ENCODE measurements at regions of chr13 and their contacts with region 1.

Region 1: GRCh38 chr13:74226791-74227475 is 92.7 kb upstream of the KLF12 start:
- DNase-seq: no peak
- H3K4me3 ChIP-seq: no peak overlapping the region
- H3K4me3 Mint-ChIP-seq: no peak overlapping the region
- H3K27ac ChIP-seq: no peak overlapping the region
- H3K27ac Mint-ChIP-seq: no peak overlapping the region
- H3K4me1 ChIP-seq: peaks cover 24% of the 10 kb centered on the region
- H3K4me1 Mint-ChIP-seq: peaks cover 14 to 31% (median 20%) of the 10 kb centered on the region in 4 donors
- H3K27me3 ChIP-seq: no peaks in the 10 kb centered on the region
- H3K27me3 Mint-ChIP-seq: no peaks in the 10 kb centered on the region

Region 2: GRCh38 chr13:74070065-74070464 is 156.9 kb before region 1 on chr13:
- CTCF ChIA-PET with region 1: no interaction called
- POLR2A ChIA-PET with region 1: no interaction called
- intact Hi-C with region 1: loop called (anchors 5 kb)
- DNase-seq: peak; percentile 73 to 81 (median 75)
- H3K4me3 ChIP-seq: peak overlapping the region in 1 of 2 donors; percentile 43
- H3K4me3 Mint-ChIP-seq: peak overlapping the region; percentile 68 to 89 (median 79)
- H3K27ac ChIP-seq: peak overlapping the region; percentile 15
- H3K27ac Mint-ChIP-seq: peak overlapping the region; percentile 73 to 94 (median 89)
- H3K4me1 ChIP-seq: peaks cover 92% of the 10 kb centered on the region
- H3K4me1 Mint-ChIP-seq: peaks cover 64 to 85% (median 77%) of the 10 kb centered on the region in 4 donors
- H3K27me3 ChIP-seq: no peaks in the 10 kb centered on the region
- H3K27me3 Mint-ChIP-seq: no peaks in the 10 kb centered on the region

Region 3: DNA sequence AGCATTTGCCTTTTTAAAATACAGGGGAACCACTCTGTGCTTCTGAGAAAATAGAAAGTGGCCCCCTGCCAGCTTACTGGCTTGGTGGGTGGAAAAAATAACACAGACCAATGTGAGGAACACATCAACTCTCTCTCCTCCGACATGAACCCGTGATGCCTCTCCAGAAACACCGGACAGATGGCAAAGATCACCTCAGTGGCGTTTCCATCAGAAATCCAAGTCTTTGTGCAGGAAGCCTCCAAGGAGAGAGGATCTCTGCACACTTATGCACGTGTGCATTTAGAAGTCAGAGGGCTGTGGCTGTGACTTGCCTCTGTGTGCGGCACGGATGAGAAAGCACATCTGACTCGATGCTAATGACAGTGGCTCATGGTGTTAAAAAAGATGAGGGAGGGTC is 19.6 kb after region 1 on chr13:
- CTCF ChIA-PET with region 1: interaction called, 6 read pairs
- POLR2A ChIA-PET with region 1: interaction called, 90 read pairs
- intact Hi-C with region 1: loop called (anchors 1 kb)
- DNase-seq: peak in 2 of 5 donors; percentile 26 to 56
- H3K4me3 ChIP-seq: no peak overlapping the region
- H3K4me3 Mint-ChIP-seq: peak overlapping the region; percentile 53 to 84 (median 69)
- H3K27ac ChIP-seq: peak overlapping the region; percentile 54
- H3K27ac Mint-ChIP-seq: peak overlapping the region; percentile 87 to 97 (median 94)
- H3K4me1 ChIP-seq: peaks cover 96% of the 10 kb centered on the region
- H3K4me1 Mint-ChIP-seq: peaks cover 79 to 100% (median 91%) of the 10 kb centered on the region in 4 donors
- H3K27me3 ChIP-seq: no peaks in the 10 kb centered on the region
- H3K27me3 Mint-ChIP-seq: no peaks in the 10 kb centered on the region

Region 4: DNA sequence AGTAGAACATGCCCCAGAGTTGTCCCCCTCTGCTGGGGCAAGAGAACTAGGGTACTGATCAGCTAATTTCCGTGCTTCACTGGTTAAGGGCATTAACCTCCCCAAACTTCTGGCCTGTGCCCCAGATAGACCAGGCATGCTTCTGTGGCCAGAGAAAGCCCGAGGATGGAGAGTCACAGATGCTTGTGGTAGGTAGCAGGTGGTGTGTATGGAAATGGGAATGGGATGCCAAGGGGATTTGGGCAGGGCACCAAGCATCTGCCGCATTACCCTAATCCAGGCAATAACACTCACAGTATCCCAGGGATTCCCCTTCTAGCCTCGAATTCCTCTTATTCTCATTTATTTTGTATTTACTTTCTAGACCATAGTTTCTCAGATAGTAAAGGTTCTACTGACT is 32.0 kb after region 1 on chr13:
- CTCF ChIA-PET with region 1: no interaction called
- POLR2A ChIA-PET with region 1: interaction called, 5 read pairs
- intact Hi-C with region 1: loop called (anchors 2 kb)
- DNase-seq: no peak
- H3K4me3 ChIP-seq: no peak overlapping the region
- H3K4me3 Mint-ChIP-seq: peak overlapping the region in 4 of 8 donors; percentile 28 to 80 (median 52)
- H3K27ac ChIP-seq: no peak overlapping the region
- H3K27ac Mint-ChIP-seq: peak overlapping the region in 5 of 7 donors; percentile 24 to 80 (median 74)
- H3K4me1 ChIP-seq: peaks cover 59% of the 10 kb centered on the region
- H3K4me1 Mint-ChIP-seq: peaks cover 48 to 67% (median 54%) of the 10 kb centered on the region in 4 donors
- H3K27me3 ChIP-seq: no peaks in the 10 kb centered on the region
- H3K27me3 Mint-ChIP-seq: no peaks in the 10 kb centered on the region